Head of caudate nucleus (tissue), 42 donors: ENCODE measurements at regions of chr1 and their contacts with region 1.

Region 1: DNA sequence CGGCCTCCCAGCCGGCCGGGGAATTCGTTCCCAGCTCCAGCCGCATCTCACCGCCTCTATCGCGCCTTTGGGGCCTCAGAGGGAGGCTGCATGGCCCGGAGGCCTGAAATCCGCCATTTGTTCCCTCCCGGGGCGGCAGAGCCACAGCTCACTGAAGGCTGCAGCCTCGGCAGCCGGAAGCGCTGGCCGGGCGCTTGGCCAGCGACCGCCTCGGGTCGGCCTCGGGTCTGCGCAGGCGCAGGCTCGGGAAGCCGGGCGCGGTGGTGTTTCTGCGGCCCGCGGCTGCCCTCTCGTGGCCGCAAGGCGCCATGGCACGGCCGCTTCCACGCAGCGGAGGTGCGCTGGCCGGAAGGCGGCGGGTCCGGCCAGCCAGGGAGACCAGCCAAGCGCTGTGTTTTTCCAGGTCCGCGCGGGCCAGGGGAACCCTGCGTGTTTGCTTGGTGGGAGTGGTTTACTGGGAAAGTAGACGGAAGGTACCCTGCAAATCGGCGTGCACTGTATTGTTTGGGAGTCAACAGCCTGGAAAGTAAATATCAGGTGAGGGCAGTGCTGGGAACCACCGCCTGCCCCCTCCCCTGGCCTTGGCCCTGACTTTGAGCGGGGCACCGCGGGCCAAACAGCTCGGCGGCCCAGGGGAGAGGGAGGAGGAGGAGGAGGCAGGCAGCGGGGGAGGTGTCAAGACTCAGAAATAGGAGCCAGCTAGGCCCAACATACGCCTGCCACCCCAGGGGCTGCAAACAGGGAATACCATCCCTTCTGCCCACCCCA is 52.7 kb upstream of the CD34 start:
- DNase-seq: peak; percentile 47 to 93 (median 86)

Region 2: DNA sequence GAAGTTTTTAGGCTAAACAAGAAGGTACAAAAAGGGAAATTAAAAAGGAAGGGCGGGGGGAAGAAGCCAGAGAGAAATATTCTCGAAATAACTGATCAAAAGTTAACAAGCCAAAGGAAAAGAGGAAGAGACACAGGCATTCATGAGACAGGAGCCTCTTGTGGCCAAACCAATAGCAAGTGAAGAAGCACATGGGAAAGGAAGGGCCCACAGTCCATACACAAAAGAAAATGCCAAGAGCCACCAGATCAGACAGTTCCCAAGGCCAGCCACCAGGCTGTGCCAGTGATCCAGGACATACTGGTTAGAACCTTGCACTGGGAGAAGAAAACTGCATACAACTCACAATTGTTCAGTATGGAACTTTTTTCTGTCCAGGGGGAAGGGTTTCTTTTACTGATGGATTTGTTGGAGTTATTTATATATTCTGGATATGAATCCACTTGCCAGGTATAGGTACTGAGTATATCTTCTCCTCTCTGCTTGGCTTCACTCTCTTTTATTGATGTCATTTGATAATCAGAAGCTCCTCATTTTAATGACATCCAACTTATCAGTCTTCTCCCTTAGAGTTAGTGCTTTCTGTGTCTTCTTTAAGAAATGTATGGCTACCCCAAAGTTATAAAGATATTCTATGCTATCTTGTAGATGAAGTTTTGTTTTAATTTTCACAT is 135.0 kb before region 1 on chr1:
- intact Hi-C with region 1: loop called (anchors 2 kb)
- DNase-seq: peak in 38 of 42 donors; percentile 58 to 89 (median 78)

Region 3: DNA sequence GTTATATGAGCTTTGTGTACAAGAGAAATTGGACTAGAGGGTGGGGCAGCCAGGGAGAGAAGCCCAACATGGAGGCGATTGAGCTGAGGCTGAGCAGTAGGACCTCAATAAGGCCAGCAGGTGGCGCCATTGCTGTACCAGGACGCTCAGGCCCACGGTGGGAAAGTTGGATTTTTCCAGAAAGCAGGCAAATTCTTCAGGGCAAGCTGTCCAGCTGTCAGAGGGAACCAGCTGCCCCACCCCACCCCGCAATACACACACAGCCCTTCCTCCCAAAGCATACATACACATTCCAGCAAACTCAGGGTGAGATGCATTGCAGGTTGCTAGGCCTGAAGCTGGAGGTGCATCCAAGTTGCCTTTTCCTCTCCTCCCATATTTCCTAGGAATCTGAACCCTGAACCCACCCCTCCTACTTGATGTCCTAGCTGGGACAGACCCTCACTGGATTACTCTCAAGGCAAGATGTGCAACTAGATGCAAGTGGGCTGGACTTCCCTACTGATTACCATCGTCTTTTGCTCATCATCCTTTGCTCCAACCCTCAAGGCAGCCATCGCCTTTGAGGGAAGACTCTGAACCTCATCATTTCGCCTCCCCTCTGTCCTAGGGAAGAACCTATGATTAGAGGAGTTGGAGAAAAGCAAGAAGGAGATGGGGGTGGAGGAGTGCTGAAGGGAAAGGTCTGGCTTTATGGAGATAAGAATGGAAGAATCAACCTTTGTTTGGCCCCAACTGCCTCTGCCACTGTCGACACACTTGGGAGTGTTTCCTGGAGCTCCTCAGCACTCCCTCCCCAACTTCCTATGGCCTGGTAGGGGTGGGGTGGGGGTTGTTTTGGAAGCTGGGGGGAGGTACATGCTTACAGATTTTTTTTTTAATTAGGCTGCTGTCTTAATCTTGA is 78.2 kb before region 1 on chr1:
- intact Hi-C with region 1: loop called (anchors 2 kb)
- DNase-seq: peak; percentile 71 to 96 (median 87)